ENCODE measurements at regions of chr14 and their contacts with region 1.

Region 1: GRCh38 chr14:68816262-68816942 is 23.5 kb upstream of the ZFP36L1 start:
- DNase-seq: no peak
- ATAC-seq: peak; percentile 64
- H3K4me3 ChIP-seq: peak overlapping the region; percentile 58
- H3K27ac ChIP-seq: peak overlapping the region; percentile 95
- H3K4me1 ChIP-seq: peaks cover 58% of the 10 kb centered on the region
- H3K27me3 ChIP-seq: no peaks in the 10 kb centered on the region
- CTCF ChIP-seq: peak; percentile 89 to 99 (median 92); a peak in 5 of 6 replicates
- EP300 ChIP-seq: 0 out of 4 replicates have a peak, but pooled peaks of 1 of the 2 experiments have one; percentile 12
- POLR2A ChIP-seq: peak; percentile 80
- RAD21 ChIP-seq: peak; percentile 92

Region 2: DNA sequence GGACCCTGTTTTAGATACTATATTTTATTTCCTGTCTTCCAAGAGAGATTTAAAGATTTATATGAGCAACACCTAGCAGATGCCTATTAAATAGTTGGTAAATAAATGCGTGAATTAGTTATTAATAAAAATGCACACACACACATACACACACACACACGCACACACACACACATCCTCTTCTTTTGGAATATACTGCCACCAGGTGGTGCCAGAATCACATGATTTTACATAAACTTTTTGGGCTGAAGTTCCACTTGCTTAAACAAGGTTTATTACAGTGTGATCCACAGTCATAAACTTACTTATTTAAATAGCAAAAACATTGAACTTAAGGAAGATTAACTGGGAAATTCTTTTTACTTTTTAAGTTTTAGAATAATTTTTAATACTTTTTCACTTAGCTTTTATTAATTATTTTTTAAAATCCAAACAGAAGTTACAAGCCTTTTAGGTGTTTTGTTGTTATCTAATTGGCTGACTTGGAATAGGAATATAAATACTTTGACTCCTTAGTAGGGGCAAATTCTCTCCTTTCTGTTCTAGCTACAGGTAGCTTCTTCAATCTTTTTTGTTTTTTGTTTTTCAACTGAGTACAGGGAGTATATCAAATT is 979.3 kb before region 1 on chr14:
- CTCF ChIA-PET with region 1: interaction called, 9 read pairs
- POLR2A ChIA-PET with region 1: no interaction called
- RAD21 ChIA-PET with region 1: interaction called, 4 read pairs
- SMC1A ChIA-PET with region 1: interaction called, 11 read pairs
- in situ Hi-C with region 1: loop called (anchors 5 kb)
- intact Hi-C with region 1: loop called (anchors 5 kb)
- DNase-seq: peak; percentile 34
- ATAC-seq: peak; percentile 76
- H3K4me3 ChIP-seq: no peak overlapping the region
- H3K27ac ChIP-seq: no peak overlapping the region
- H3K4me1 ChIP-seq: no peaks in the 10 kb centered on the region
- H3K27me3 ChIP-seq: no peaks in the 10 kb centered on the region
- CTCF ChIP-seq: peak; percentile 55 to 79 (median 65); a peak in 5 of 6 replicates
- EP300 ChIP-seq: no peak
- POLR2A ChIP-seq: no peak
- RAD21 ChIP-seq: peak; percentile 85

Region 3: DNA sequence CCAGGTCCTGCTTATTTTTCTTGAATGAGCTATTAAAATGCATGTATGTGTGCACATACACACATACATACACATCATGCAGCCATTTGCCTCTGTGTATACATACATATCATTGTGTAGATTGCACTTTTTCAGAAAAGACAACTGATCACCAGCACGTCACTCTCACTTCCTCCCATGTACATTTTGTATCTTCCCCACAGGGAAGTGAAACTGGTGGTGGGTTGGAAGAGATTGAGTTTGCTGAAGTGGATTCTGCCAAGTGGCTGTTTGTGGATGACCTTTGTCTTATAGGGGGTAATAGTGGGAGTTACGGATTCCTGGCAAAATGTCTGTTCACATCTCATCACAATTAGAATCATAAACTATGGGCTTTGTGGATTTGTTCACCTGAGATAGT is 548.2 kb before region 1 on chr14:
- CTCF ChIA-PET with region 1: interaction called, 3 read pairs
- POLR2A ChIA-PET with region 1: interaction called, 5 read pairs
- RAD21 ChIA-PET with region 1: interaction called, 15 read pairs
- SMC1A ChIA-PET with region 1: interaction called, 20 read pairs
- in situ Hi-C with region 1: no loop called
- intact Hi-C with region 1: no loop called
- DNase-seq: peak; percentile 93
- ATAC-seq: peak; percentile 84
- H3K4me3 ChIP-seq: no peak overlapping the region
- H3K27ac ChIP-seq: peak overlapping the region; percentile 84
- H3K4me1 ChIP-seq: peaks cover 73% of the 10 kb centered on the region
- H3K27me3 ChIP-seq: no peaks in the 10 kb centered on the region
- CTCF ChIP-seq: no peak
- EP300 ChIP-seq: peak; percentile 93 to 100; a peak in 3 of 4 replicates
- POLR2A ChIP-seq: no peak
- RAD21 ChIP-seq: peak; percentile 22

Region 4: DNA sequence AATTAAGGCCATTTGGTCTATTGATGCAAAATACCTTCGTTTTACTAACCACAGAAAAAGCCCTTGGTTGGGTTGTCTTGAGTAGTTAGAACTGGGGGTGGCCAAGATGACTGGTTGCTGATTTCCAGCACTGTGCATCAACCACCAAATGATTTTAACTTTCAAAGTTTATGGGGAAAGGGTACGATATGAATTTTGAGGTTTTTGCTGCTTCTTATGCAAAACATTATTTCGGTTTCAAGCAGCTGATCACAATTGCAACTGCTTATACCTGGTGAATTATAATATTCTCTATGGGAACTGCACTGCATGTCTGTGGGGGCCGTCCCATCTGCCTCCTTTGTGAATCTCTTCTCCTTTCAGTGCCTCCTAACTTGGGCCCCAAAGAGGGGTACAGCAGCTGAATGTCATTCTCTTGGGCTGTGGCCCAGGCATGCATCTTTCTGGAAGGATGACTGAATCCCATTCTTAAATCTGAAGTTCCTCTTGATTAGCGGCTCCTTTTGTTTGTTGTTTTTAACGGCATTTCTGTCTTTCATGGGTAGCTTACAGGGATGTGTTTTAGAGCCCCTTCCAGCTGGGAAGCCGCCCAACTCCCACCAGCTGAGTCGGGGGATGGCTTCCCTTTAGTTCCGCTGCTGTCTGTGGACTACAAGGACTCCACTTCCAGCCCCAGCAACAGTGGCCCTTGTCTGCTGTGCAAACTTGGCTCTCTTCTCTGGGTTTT is 503.4 kb before region 1 on chr14:
- CTCF ChIA-PET with region 1: interaction called, 3 read pairs
- POLR2A ChIA-PET with region 1: interaction called, 3 read pairs
- RAD21 ChIA-PET with region 1: interaction called, 6 read pairs
- SMC1A ChIA-PET with region 1: interaction called, 25 read pairs
- in situ Hi-C with region 1: no loop called
- intact Hi-C with region 1: no loop called
- DNase-seq: peak; percentile 99
- ATAC-seq: peak; percentile 89
- H3K4me3 ChIP-seq: no peak overlapping the region; the same call in 1 of the 2 replicates
- H3K27ac ChIP-seq: peak overlapping the region; percentile 91
- H3K4me1 ChIP-seq: peaks cover 64% of the 10 kb centered on the region
- H3K27me3 ChIP-seq: no peaks in the 10 kb centered on the region
- CTCF ChIP-seq: no peak
- EP300 ChIP-seq: peak; percentile 88 to 97; a peak in 3 of 4 replicates
- POLR2A ChIP-seq: peak; percentile 49; the same call in 1 of the 2 replicates
- RAD21 ChIP-seq: peak; percentile 41

Region 5: DNA sequence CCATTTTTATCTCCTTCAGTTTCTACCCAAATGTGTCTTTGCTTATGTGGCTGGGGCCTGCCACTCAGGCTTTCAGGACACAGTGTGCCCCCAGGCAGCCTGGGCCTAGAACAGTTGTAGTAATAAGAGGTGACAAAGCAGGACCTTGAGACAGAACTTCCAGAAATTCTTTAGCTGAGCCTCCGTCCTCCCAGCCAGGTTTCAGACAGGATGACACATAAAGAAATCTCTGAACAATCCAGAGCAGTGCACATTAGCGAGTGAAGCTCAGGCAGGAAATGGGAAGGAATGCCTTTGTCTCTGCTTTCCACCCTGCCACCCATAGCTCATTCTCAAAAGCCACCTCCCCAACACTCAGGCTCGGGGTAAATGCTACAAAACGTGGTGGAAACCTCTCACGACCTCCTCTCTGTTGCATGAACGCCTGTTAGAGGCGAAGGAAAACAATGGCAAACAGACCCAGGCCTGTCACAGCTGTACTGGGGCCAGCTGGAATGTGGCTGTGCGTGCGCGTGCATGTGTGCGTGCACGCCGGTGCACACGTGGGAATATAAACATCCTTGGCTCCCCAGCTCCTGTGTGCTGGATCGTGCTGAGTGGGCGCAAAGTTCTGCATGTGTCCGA is 310.3 kb before region 1 on chr14:
- CTCF ChIA-PET with region 1: interaction called, 3 read pairs
- POLR2A ChIA-PET with region 1: interaction called, 3 read pairs
- RAD21 ChIA-PET with region 1: interaction called, 13 read pairs
- SMC1A ChIA-PET with region 1: interaction called, 11 read pairs
- in situ Hi-C with region 1: no loop called
- intact Hi-C with region 1: no loop called
- DNase-seq: no peak
- ATAC-seq: peak; percentile 32
- H3K4me3 ChIP-seq: peak overlapping the region; percentile 21
- H3K27ac ChIP-seq: peak overlapping the region; percentile 76
- H3K4me1 ChIP-seq: peaks cover 31% of the 10 kb centered on the region
- H3K27me3 ChIP-seq: no peaks in the 10 kb centered on the region
- CTCF ChIP-seq: no peak
- EP300 ChIP-seq: no peak
- POLR2A ChIP-seq: no peak
- RAD21 ChIP-seq: no peak

Region 6: GRCh38 chr14:68843471-68844209 is 27.2 kb after region 1 on chr14:
- CTCF ChIA-PET with region 1: interaction called, 231 read pairs
- POLR2A ChIA-PET with region 1: no interaction called
- RAD21 ChIA-PET with region 1: interaction called, 17 read pairs
- SMC1A ChIA-PET with region 1: interaction called, 41 read pairs
- in situ Hi-C with region 1: no loop called
- intact Hi-C with region 1: no loop called
- DNase-seq: no peak
- ATAC-seq: peak; percentile 91
- H3K4me3 ChIP-seq: peak overlapping the region; percentile 25; the same call in 1 of the 2 replicates
- H3K27ac ChIP-seq: no peak overlapping the region
- H3K4me1 ChIP-seq: peaks cover 10% of the 10 kb centered on the region; the same call in 1 of the 2 replicates
- H3K27me3 ChIP-seq: no peaks in the 10 kb centered on the region
- CTCF ChIP-seq: peak; percentile 90 to 91 (median 90)
- EP300 ChIP-seq: no peak
- POLR2A ChIP-seq: no peak
- RAD21 ChIP-seq: peak; percentile 74